Vagina (tissue), 2 donors: ENCODE measurements at regions of chr19 and their contacts with region 1.

Region 1: GRCh38 chr19:5686647-5687359 is 3.3 kb upstream of the RPL36 start:
- DNase-seq: no peak
- H3K4me3 ChIP-seq: peak overlapping the region; percentile 56 to 59
- H3K27ac ChIP-seq: peak overlapping the region; percentile 67
- H3K4me1 ChIP-seq: peaks cover 23% of the 10 kb centered on the region
- H3K27me3 ChIP-seq: no peaks in the 10 kb centered on the region
- CTCF ChIP-seq: peak; percentile 37 to 73 (median 50)
- POLR2A ChIP-seq: peak in 1 of 2 donors; percentile 10

Region 2: DNA sequence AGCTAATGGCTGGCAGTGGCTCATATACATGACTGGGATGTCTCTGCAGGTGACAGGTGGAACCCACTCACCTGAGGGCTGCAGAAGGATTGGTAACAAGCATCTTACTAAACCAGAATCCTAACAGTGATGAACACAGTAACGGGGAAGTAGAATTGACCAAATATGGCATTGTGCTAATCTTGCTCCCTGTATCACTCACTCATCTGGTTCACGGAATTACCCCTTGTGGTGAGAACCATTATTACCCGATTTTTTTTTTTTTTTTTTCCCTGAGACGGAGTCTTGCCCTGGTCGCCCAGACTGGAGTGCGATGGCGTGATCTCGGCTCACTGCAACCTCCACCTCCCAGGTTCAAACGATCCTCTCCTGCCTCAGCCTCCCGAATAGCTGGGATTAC is 415.7 kb before region 1 on chr19:
- intact Hi-C with region 1: no loop called
- DNase-seq: no peak
- H3K4me3 ChIP-seq: no peak overlapping the region
- H3K27ac ChIP-seq: no peak overlapping the region
- H3K4me1 ChIP-seq: no peaks in the 10 kb centered on the region
- H3K27me3 ChIP-seq: no peaks in the 10 kb centered on the region
- CTCF ChIP-seq: no peak
- POLR2A ChIP-seq: no peak

Region 3: DNA sequence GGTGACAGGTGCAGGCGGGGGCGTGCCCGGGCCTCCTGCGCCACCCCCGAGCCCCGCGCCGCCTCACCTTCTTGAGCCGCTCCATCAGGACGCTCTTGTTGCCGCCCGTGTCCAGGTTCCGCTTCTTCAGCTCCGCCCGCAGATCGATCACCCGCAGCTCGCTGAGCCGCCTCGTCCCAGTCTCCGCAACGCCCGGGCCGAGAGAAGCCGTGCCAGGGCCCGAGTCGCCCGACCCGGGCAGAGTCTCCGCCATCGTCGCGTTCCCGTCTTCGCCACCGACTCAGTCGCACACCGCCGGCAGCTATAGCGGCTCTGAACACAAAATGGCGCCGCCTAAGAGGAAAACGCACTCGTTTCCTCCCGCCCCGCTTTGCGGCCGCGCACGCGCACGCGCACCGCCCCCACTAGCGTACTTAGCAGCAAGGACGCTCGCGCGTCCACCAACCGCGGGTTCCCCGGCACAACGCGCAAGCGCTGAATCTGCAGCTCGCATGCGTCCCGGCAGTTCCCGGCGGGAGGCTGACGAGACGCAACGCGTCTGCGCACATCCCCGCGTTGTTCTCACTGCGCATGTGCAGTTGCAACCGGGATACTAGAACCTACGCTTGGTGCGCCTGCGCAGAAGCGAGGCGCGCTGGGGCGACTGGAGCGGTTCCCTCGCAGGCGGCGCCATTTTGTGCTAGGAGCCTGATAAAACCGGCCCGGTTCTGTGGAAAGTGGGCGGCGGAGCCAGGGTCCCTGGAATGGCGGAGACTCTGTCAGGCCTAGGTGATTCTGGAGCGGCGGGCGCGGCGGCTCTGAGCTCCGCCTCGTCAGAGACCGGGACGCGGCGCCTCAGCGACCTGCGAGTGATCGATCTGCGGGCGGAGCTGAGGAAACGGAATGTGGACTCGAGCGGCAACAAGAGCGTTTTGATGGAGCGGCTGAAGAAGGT is 64.1 kb before region 1 on chr19 and contains the starts of genes SAFB and SAFB2:
- intact Hi-C with region 1: loop called (anchors 5 kb)
- DNase-seq: peak; percentile 98 to 99
- H3K4me3 ChIP-seq: peak within 1 kb of the TSS; percentile 96
- H3K27ac ChIP-seq: peak within 1 kb of the TSS; percentile 94
- H3K4me1 ChIP-seq: peaks cover 79% of the 10 kb centered on the region
- H3K27me3 ChIP-seq: no peaks in the 10 kb centered on the region
- CTCF ChIP-seq: peak in 1 of 3 experiments; percentile 1
- POLR2A ChIP-seq: peak in 1 of 2 donors; percentile 95
- total RNA-seq, gene SAFB: 145 TPM
- total RNA-seq, gene SAFB2: 85.4 TPM